HepG2 (cell line): ENCODE measurements at regions of chr14 and their contacts with region 1.

Region 1: DNA sequence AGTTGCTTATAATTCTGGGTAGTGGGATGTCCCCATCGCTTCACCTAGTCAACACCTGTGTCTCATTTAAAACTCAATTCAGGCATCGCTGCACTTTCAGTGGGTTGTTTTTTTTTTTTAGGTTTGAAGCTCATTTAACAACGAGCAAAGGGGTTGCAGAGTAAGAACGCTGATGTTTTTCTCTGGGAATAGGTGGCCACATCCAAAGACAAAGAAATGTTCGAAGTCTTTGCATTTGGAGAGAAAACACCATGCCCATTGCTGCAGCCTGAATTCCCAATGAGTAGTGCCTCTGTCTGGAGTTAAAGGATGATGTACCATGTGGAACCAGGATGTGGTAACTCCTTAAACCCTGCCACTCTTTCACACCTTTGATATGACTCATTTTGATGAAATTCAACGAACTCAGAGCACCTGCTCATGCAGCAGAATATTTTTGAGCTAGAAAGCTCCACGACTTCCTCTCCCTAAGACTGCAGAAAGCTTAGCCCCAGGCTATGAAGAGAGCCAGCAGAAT is 35.1 kb upstream of the BATF start:
- DNase-seq: no peak
- ATAC-seq: no peak
- H3K4me3 ChIP-seq: no peak overlapping the region
- H3K27ac ChIP-seq: no peak overlapping the region
- H3K4me1 ChIP-seq: 0 out of 2 replicates have a peak, but pooled peaks cover 9% of the 10 kb centered on the region
- H3K27me3 ChIP-seq: no peaks in the 10 kb centered on the region; a peak in 1 of 5 replicates
- CTCF ChIP-seq: no peak
- EP300 ChIP-seq: no peak
- POLR2A ChIP-seq: no peak
- RAD21 ChIP-seq: no peak

Region 2: GRCh38 chr14:75126679-75127473 is 360.3 kb before region 1 on chr14 and contains the start of gene NEK9:
- CTCF ChIA-PET with region 1: no interaction called
- POLR2A ChIA-PET with region 1: no interaction called
- in situ Hi-C with region 1: loop called (anchors 10 kb)
- intact Hi-C with region 1: no loop called
- DNase-seq: peak; percentile 73
- ATAC-seq: peak; percentile 96
- H3K4me3 ChIP-seq: peak within 1 kb of the TSS; percentile 83 to 90 (median 84)
- H3K27ac ChIP-seq: peak within 1 kb of the TSS; percentile 95
- H3K4me1 ChIP-seq: peaks cover 26% of the 10 kb centered on the region
- H3K27me3 ChIP-seq: no peaks in the 10 kb centered on the region; a peak in 1 of 5 replicates
- CTCF ChIP-seq: no peak
- EP300 ChIP-seq: no peak
- POLR2A ChIP-seq: peak; percentile 90 to 93
- RAD21 ChIP-seq: peak; percentile 43
- total RNA-seq, gene NEK9: 16.5 and 29.4 TPM in 2 replicates

Region 3: DNA sequence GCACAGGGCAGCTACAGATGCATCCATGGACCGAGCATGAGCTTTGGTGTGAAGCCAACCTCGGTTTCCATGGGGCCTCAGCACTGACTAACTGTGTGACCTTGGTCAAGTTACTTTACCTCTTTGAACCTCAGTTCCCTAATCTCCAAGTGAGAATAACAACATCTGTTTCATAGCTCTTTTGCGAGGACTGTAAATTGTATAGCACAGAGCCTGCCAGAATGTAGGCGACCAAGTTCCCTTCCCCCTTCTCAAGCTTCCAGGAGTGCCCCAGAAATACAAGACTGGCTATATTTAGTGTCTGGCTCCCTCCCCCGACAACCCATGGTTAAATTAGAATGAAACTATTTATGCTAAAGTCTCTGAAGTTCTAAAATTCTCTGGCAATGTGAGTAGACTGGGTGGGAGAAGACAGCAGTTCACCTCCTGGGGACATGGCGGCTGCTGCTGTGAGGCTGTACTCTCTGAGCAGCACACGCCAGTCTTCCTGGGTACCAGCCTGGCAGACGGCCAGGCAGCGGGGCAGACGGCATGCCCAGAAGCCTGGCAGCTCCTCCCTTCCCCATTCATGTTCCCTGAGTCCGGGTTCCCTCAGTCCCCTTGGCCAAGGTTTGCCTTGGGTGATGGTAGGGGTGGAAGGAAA is 288.8 kb before region 1 on chr14:
- CTCF ChIA-PET with region 1: no interaction called
- POLR2A ChIA-PET with region 1: no interaction called
- in situ Hi-C with region 1: no loop called
- intact Hi-C with region 1: no loop called
- DNase-seq: peak; percentile 16
- ATAC-seq: no peak
- H3K4me3 ChIP-seq: no peak overlapping the region
- H3K27ac ChIP-seq: no peak overlapping the region
- H3K4me1 ChIP-seq: peaks cover 41% of the 10 kb centered on the region
- H3K27me3 ChIP-seq: peaks cover 7 to 68% of the 10 kb centered on the region in 2 experiments
- CTCF ChIP-seq: no peak
- EP300 ChIP-seq: no peak
- POLR2A ChIP-seq: no peak
- RAD21 ChIP-seq: no peak

Region 4: DNA sequence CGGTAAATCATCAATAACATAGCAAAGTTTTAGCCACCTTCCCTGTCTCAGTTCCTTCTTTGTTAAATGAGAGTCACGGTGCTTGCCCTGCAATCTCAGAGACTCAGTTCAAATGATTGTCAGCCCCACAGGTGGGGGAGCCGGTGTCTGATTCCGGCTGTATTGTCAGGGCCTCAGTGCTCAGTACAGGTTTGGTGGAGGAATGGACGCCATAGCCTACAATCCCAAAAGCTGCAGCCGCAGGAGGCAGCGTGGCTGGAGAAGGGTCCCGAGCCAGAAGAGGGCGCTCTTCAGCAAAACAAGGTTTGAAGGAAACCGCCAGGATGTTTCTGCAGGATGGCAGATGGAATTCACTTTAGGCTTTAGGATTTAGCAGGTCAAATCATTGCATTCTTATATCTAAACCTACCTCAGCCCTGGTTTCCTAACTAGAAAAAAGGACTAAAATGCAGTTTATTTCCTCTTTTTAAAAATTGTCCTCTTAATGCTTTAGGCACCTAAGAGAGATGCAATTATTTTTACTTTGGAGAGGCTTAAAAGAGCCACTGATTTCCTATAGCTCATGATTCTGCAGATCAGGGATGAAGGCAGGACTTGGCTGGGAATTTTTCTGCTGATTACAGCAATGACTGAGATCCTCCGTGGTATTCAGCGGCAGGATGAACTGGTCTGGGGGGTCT is 179.4 kb before region 1 on chr14:
- CTCF ChIA-PET with region 1: interaction called, 46 read pairs
- POLR2A ChIA-PET with region 1: no interaction called
- in situ Hi-C with region 1: loop called (anchors 5 kb)
- intact Hi-C with region 1: loop called (anchors 1 kb)
- DNase-seq: peak; percentile 63
- ATAC-seq: peak; percentile 91
- H3K4me3 ChIP-seq: no peak overlapping the region
- H3K27ac ChIP-seq: no peak overlapping the region
- H3K4me1 ChIP-seq: peaks cover 12% of the 10 kb centered on the region
- H3K27me3 ChIP-seq: peaks cover 0 to 4% of the 10 kb centered on the region in 2 experiments; a peak in 1 of 5 replicates
- CTCF ChIP-seq: peak; percentile 93
- EP300 ChIP-seq: no peak
- POLR2A ChIP-seq: no peak
- RAD21 ChIP-seq: peak; percentile 81

Region 5: GRCh38 chr14:75604856-75605851 is 117.9 kb after region 1 on chr14:
- CTCF ChIA-PET with region 1: no interaction called
- POLR2A ChIA-PET with region 1: no interaction called
- in situ Hi-C with region 1: no loop called
- intact Hi-C with region 1: no loop called
- DNase-seq: no peak
- ATAC-seq: no peak
- H3K4me3 ChIP-seq: no peak overlapping the region
- H3K27ac ChIP-seq: no peak overlapping the region
- H3K4me1 ChIP-seq: peaks cover 69% of the 10 kb centered on the region
- H3K27me3 ChIP-seq: no peaks in the 10 kb centered on the region
- CTCF ChIP-seq: no peak
- EP300 ChIP-seq: no peak
- POLR2A ChIP-seq: no peak
- RAD21 ChIP-seq: no peak